A549 (cell line): ENCODE measurements at regions of chr5 and their contacts with region 1.

Region 1: DNA sequence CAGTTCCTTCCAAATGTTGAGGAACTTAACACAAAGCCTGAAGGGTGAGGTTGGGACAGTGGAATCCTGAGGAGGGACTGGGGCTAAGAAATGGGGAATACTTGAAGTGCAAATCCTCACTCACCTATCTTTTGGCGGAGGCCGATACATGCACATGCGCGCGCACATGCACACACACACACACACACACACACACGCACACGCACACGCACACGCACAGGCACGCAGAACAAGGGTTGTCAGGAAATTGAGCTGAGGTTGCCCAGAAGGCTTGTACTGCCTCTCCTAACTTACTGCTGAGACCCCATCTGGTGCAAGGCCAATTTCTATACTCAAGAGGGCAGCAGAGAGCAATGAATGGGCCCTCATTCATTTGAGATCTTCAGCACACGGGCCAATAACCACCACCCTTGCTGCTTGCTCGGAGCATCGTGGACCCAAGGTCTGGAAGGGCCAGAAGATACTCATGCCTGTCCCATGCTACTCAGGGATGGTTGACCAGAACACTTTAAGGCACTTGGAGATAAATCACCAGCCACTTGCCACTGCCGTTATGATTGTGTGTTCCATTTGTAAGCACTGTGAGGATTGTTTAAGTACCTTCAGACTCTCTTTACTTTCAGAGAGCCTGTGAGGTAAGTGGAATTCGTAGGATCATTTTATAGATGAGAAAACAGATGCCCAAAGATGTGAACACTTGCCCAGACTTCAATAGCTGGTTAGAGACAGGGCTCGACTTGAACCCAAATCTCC is 21.5 kb downstream of the BTF3 start:
- DNase-seq: peak; percentile 86 to 93
- ATAC-seq: peak; percentile 99 to 100
- H3K4me3 ChIP-seq: no peak overlapping the region
- H3K27ac ChIP-seq: 0 out of 6 replicates have a peak overlapping the region, but pooled peaks of 1 of the 2 experiments have one; percentile 10
- H3K4me1 ChIP-seq: no peaks in the 10 kb centered on the region; the same call in 2 of the 3 replicates
- CTCF ChIP-seq: peak; percentile 81
- EP300 ChIP-seq: no peak
- POLR2A ChIP-seq: no peak
- RAD21 ChIP-seq: peak; percentile 87 to 93

Region 2: DNA sequence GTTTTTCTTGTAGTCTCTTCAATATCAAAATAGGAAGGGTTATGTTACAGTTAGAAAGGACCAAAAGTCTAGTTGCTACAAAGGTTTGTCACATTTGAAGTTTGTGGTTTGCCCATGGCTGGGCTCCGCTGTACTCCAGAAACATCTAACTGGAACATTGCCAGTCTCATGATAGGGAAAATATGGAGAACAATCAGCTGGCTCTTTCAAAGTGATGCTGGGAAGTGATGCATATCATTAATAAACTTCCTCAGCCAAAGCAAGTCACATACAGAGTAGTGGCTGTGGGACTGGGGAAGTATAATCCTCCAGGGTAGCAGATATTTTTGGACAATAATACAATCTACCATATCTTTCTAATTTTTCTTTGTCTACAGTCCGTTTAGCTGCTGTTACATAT is 12.6 kb before region 1 on chr5:
- CTCF ChIA-PET with region 1: interaction called, 44 read pairs
- POLR2A ChIA-PET with region 1: no interaction called
- DNase-seq: no peak
- ATAC-seq: peak in 1 of 2 experiments; percentile 43; a peak in 3 of 6 replicates
- H3K4me3 ChIP-seq: no peak overlapping the region
- H3K27ac ChIP-seq: no peak overlapping the region
- H3K4me1 ChIP-seq: no peaks in the 10 kb centered on the region
- CTCF ChIP-seq: no peak
- EP300 ChIP-seq: no peak
- POLR2A ChIP-seq: no peak
- RAD21 ChIP-seq: no peak

Region 3: GRCh38 chr5:73540192-73540591 is 20.5 kb after region 1 on chr5:
- CTCF ChIA-PET with region 1: interaction called, 193 read pairs
- POLR2A ChIA-PET with region 1: interaction called, 3 read pairs
- DNase-seq: peak in 1 of 2 experiments; percentile 35
- ATAC-seq: peak; percentile 41 to 52; a peak in 3 of 6 replicates
- H3K4me3 ChIP-seq: no peak overlapping the region
- H3K27ac ChIP-seq: peak overlapping the region; percentile 80 to 84; a peak in 5 of 6 replicates
- H3K4me1 ChIP-seq: peaks cover 41% of the 10 kb centered on the region
- CTCF ChIP-seq: no peak
- EP300 ChIP-seq: no peak
- POLR2A ChIP-seq: no peak
- RAD21 ChIP-seq: no peak

Region 4: DNA sequence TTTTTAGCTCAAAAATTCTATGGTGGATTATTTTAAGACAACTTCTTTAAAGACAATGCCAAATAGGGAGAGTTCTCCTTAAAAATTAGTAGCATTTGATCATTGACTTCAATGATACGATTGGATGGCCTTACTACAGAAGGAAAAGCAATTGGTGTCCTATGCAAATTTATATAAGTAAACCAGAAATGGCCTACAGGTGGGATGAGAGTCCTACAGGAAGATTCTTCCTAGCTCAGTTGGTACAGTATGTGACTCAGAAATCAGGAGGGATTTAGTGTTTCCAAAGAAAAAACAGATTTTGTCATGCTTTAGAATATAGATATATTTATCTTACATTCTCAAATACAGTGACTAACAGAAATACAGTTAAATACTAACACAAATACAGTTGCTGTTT is 39.2 kb after region 1 on chr5:
- CTCF ChIA-PET with region 1: interaction called, 15 read pairs
- POLR2A ChIA-PET with region 1: no interaction called
- DNase-seq: peak; percentile 47 to 51
- ATAC-seq: peak; percentile 79 to 83; a peak in 4 of 6 replicates
- H3K4me3 ChIP-seq: no peak overlapping the region
- H3K27ac ChIP-seq: no peak overlapping the region
- H3K4me1 ChIP-seq: peaks cover 2% of the 10 kb centered on the region; the same call in 1 of the 3 replicates
- CTCF ChIP-seq: peak; percentile 24; the same call in 2 of the 3 replicates
- EP300 ChIP-seq: no peak
- POLR2A ChIP-seq: no peak
- RAD21 ChIP-seq: peak; percentile 33 to 49; a peak in 3 of 5 replicates

Region 5: GRCh38 chr5:73722231-73722630 is 202.5 kb after region 1 on chr5:
- CTCF ChIA-PET with region 1: no interaction called
- POLR2A ChIA-PET with region 1: no interaction called
- DNase-seq: no peak
- ATAC-seq: no peak
- H3K4me3 ChIP-seq: no peak overlapping the region
- H3K27ac ChIP-seq: no peak overlapping the region
- H3K4me1 ChIP-seq: peaks cover 21% of the 10 kb centered on the region
- CTCF ChIP-seq: no peak
- EP300 ChIP-seq: no peak
- POLR2A ChIP-seq: no peak
- RAD21 ChIP-seq: no peak